Esophagus squamous epithelium (tissue), 5 donors: ENCODE measurements at regions of chr4 and their contacts with region 1.

Region 1: DNA sequence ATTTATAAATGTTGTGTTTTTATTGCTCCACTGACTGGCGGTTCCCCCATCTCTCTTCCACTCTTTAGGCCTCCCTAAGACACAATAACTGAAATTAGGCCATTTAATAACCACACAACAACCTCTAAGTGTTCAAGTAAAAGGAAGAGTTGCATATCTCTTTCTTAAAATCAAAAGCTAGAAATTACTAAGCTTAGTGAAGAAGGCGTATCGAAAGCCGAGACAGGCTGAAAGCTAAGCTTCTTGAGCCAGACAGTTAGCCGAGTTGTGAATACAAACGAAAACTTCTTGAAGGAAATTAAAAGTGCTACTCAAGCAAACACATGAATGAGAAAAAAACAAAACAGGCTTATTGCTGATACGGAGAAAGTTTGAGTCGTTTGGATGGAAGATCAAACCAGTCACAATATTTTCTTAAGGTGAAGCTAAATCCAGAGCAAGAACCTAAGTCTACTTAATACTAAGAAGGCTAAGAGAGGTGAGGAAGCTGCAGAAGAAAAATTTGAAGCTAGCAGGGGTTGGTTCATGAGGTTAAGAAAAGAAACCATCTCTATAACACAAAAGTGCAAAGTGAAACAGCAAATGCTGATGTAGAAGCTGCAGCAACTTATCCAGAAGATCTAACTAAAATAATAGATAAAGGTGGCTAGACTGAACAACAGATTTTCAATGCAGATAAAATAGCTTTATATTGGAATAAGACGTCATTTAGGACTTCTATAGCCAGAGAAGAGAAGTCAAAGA is 194.0 kb upstream of the TTC29 start:
- DNase-seq: no peak
- H3K4me3 ChIP-seq: no peak overlapping the region
- H3K27ac ChIP-seq: no peak overlapping the region
- H3K4me1 ChIP-seq: peaks cover 0 to 2% (median 0%) of the 10 kb centered on the region in 3 donors
- H3K27me3 ChIP-seq: no peaks in the 10 kb centered on the region
- CTCF ChIP-seq: no peak
- POLR2A ChIP-seq: no peak

Region 2: GRCh38 chr4:145644699-145645098 is 1494.9 kb before region 1 on chr4:
- intact Hi-C with region 1: loop called (anchors 10 kb)
- DNase-seq: no peak
- H3K4me3 ChIP-seq: no peak overlapping the region
- H3K27ac ChIP-seq: no peak overlapping the region
- H3K4me1 ChIP-seq: no peaks in the 10 kb centered on the region
- H3K27me3 ChIP-seq: no peaks in the 10 kb centered on the region
- CTCF ChIP-seq: no peak
- POLR2A ChIP-seq: no peak